OCI-LY7 (cell line): ENCODE measurements at regions of chr3 and their contacts with region 1.

Region 1: GRCh38 chr3:169812332-169813235 is at the starts of genes LRRC34 and LRRIQ4:
- DNase-seq: peak; percentile 83
- H3K4me3 ChIP-seq: peak within 1 kb of the TSS; percentile 62
- H3K27ac ChIP-seq: peak within 1 kb of the TSS; percentile 22
- H3K4me1 ChIP-seq: peaks cover 41% of the 10 kb centered on the region
- CTCF ChIP-seq: no peak
- total RNA-seq, gene LRRC34: 2.2 and 2.8 TPM in 2 replicates
- total RNA-seq, gene LRRIQ4: 0.08 and 0.47 TPM in 2 replicates

Region 2: DNA sequence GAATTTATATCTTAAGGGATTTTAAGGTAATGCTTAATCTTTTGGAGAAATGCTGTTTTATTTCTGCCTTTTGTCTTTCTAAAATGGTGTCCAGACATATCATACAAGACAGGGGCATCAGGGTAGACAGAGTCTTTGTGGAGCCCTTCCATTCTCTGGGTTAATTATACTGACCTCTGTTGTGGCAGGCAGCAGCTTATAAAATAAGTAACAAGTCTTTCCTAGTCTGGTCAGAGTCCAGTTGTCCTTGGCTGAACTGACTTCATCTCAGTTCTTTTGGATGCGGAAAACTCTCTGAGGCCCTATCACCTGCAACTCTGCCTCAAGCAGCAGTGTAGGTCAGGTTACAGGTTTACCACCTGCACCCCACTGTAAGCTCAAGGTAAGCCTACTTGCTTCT is 20.2 kb before region 1 on chr3:
- CTCF ChIA-PET with region 1: no interaction called
- POLR2A ChIA-PET with region 1: interaction called, 25 read pairs
- intact Hi-C with region 1: no loop called
- DNase-seq: no peak
- H3K4me3 ChIP-seq: no peak overlapping the region
- H3K27ac ChIP-seq: no peak overlapping the region
- H3K4me1 ChIP-seq: no peaks in the 10 kb centered on the region
- CTCF ChIP-seq: no peak

Region 3: GRCh38 chr3:169836078-169836941 is 23.7 kb after region 1 on chr3:
- CTCF ChIA-PET with region 1: interaction called, 3 read pairs
- POLR2A ChIA-PET with region 1: interaction called, 16 read pairs
- intact Hi-C with region 1: loop called (anchors 2 kb)
- DNase-seq: peak; percentile 70
- H3K4me3 ChIP-seq: no peak overlapping the region
- H3K27ac ChIP-seq: peak overlapping the region; percentile 63
- H3K4me1 ChIP-seq: peaks cover 38% of the 10 kb centered on the region
- CTCF ChIP-seq: no peak